ENCODE measurements at regions of chr19 and their contacts with region 1.

Region 1: DNA sequence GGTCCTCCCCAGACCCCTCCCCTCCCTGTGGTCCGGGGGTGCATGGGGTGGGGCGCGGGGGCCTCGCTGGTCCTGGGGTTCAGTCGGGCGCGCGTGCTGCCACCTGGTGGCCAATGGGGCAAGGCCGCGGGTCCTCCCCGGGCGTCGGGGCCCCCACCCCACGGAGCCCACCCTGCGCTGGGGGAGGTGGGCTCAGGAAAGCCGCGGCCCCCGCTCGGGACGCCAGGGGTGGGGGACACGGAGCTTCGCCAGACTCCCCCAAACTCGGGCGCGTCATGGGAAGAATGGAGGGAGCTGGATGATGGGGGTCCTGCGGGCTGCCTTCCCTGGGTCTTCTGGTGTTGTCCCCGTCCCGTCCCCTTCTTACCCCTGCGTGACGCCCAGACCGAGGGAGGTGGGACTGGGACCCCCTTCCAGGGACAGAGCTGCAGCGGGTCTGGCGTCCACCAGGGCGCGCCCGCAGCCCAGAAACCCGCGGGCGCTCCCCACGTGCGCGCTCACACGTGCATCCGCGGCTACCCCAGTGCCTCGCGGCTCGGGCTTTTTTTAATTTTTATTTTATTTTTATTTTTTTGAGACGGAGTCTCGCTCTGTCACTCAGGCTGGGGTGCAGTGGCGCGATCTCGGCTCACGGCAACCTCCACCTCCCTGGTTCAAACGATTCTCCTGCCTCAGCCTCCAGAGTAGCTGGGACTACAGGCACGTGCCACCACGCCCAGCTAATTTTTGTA is 19.8 kb upstream of the TCF3 start:
- DNase-seq: peak in 2 of 3 donors; percentile 72 to 78
- ATAC-seq: peak; percentile 60 to 63
- H3K4me3 ChIP-seq: no peak overlapping the region
- H3K27ac ChIP-seq: no peak overlapping the region
- H3K4me1 ChIP-seq: no peaks in the 10 kb centered on the region
- H3K27me3 ChIP-seq: no peaks in the 10 kb centered on the region

Region 2: GRCh38 chr19:1406774-1407499 is 265.3 kb before region 1 on chr19:
- intact Hi-C with region 1: no loop called
- DNase-seq: peak; percentile 99 to 100 (median 100)
- ATAC-seq: peak; percentile 87 to 90
- H3K4me3 ChIP-seq: peak overlapping the region; percentile 44
- H3K27ac ChIP-seq: peak overlapping the region; percentile 43
- H3K4me1 ChIP-seq: peaks cover 17% of the 10 kb centered on the region
- H3K27me3 ChIP-seq: no peaks in the 10 kb centered on the region

Region 3: GRCh38 chr19:1551068-1552040 is 120.8 kb before region 1 on chr19:
- intact Hi-C with region 1: loop called (anchors 5 kb)
- DNase-seq: no peak
- ATAC-seq: no peak
- H3K4me3 ChIP-seq: no peak overlapping the region
- H3K27ac ChIP-seq: no peak overlapping the region
- H3K4me1 ChIP-seq: no peaks in the 10 kb centered on the region
- H3K27me3 ChIP-seq: no peaks in the 10 kb centered on the region